Activated T-helper 2 cell treated with anti-CD3 and anti-CD28 coated beads, Interferon-gamma antibody, Interleukin-2, Interleukin-4, amounts not matched to agents 10 μg/mL and 5 μg/mL and 100 μg/mL, durations not matched to agents 14 hours and 24 hours and 36 hours (primary cell): ENCODE measurements at regions of chr10 and their contacts with region 1.

Region 1: DNA sequence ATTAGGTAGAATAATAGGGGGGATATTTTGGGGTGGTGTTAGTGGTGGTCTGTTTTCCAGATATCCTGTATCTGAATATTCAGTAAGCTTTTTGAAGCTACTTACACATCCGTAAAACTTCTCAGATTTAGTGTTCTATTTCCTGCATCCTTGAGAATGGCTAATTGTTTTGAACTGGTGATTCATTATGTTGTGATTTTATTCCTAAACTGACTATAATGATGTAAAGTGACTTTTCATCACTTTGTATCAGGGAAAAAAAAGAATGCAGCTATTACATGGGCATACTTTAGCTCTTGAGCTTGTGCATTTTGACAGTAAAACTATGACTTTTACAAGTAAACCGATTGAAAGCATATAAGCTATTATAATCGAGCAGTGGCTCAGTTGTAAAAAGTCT is 18.2 kb downstream of the WAC start:
- DNase-seq: no peak
- H3K4me3 Mint-ChIP-seq: no peak overlapping the region
- H3K27ac Mint-ChIP-seq: no peak overlapping the region
- H3K4me1 Mint-ChIP-seq: peaks cover 55% of the 10 kb centered on the region
- H3K27me3 Mint-ChIP-seq: no peaks in the 10 kb centered on the region

Region 2: DNA sequence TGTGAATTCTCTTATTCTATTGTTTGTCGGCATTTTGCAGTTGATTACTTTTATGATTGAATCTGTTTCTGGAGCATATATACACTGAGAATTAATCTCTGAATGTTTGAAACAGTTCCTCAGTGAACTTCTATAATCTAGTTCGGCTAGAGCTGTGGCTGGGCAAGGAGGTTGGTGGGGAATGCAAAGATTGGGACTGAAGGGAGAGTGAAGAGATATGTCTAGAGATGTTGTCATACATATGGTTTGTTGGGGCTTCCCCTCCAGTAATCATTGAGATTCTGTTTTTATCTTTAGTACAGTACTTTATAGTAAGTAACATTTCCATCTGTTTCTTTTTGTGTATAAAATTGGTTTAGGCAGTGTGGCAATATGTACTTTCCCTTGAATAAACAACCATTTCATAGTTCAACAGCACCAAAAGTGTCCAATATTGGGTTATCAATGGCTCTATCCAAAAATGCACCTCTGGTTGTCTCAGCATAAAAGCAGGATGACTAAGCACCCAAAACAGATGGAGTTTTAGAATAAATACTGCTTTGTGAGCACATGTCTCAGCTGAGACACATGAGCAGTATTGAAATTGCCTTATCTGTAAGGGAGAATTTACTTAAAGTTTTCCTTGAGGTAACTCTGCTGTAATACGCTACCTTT is 18.5 kb after region 1 on chr10:
- intact Hi-C with region 1: loop called (anchors 2 kb)
- DNase-seq: no peak
- H3K4me3 Mint-ChIP-seq: no peak overlapping the region
- H3K27ac Mint-ChIP-seq: peak overlapping the region; percentile 72
- H3K4me1 Mint-ChIP-seq: peaks cover 51% of the 10 kb centered on the region
- H3K27me3 Mint-ChIP-seq: no peaks in the 10 kb centered on the region